PC-9 (cell line): ENCODE measurements at regions of chr14 and their contacts with region 1.

Region 1: DNA sequence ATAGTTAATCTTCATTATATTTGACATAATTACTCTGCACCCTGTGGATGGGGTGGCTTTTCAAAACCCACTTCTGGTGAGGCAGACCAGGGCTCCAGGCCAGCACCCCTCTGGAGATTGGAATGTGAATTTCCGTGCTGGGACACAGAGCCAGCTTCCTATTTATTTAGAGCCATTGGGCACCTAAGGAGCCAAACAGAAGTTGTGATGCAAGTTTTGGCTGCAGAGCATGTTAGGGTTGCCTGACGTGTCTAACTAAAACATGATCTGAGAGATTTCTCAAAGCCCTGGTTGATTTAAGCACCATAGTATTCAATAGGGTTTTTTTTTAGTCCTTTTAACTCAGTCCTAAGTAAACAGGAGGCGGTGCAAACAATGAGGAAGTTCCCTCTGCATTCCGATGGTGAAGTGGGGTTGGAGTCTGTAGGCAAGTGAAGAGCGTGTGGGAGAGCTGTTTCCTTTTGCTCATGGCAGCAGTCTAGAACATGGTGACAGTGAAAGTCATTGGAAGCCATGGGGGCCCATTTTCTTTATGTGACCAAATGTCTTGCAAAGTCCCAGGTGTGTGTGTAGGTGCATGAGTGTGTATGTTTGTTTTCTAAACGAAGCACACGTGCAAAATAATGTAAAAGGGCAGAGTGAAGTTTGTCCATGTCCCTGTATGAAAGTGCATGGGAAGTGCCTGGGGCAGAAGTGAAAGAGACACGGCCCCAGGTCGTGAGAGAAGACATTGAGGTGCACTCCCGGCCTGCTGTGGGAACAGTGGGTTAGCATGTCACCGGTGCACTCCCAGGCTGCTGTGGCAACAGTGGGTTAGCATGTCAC is 117.7 kb downstream of the PRKCH start:
- DNase-seq: peak; percentile 74 to 100
- H3K4me3 ChIP-seq: peak overlapping the region; percentile 50
- H3K27ac ChIP-seq: peak overlapping the region; percentile 93
- H3K4me1 ChIP-seq: peaks cover 37% of the 10 kb centered on the region
- H3K27me3 ChIP-seq: no peaks in the 10 kb centered on the region
- CTCF ChIP-seq: no peak

Region 2: DNA sequence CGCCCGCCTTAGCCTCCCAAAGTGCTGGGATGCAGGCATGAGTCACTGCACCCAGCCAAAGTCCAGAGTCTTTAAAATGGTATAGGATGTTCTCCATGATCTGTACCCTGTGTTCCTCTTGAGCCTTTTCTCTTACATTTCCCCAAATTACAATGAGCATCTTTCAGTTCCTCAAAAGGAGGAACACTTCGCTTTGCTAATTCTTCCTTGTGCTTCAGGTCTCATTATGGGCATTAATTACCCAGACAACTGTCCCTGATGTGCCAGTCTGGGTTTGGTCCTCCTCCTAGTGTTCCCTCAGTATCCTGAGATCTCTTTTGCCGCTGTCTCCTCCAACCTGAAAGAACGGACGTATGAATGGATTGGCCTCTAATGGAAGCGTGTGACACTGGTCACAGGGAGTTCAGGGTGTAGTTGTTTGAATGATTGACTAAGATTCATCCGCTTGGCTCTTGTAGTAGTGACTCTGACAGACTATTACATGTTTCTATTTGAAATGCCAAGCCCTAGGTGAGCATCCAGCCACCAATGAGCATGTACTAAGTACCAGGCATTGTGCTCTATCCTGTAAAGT is 109.5 kb before region 1 on chr14:
- CTCF ChIA-PET with region 1: no interaction called
- POLR2A ChIA-PET with region 1: no interaction called
- intact Hi-C with region 1: no loop called
- DNase-seq: no peak
- H3K4me3 ChIP-seq: no peak overlapping the region
- H3K27ac ChIP-seq: no peak overlapping the region
- H3K4me1 ChIP-seq: peaks cover 26% of the 10 kb centered on the region
- H3K27me3 ChIP-seq: no peaks in the 10 kb centered on the region
- CTCF ChIP-seq: no peak

Region 3: GRCh38 chr14:61355892-61356325 is 83.2 kb before region 1 on chr14:
- CTCF ChIA-PET with region 1: no interaction called
- POLR2A ChIA-PET with region 1: no interaction called
- intact Hi-C with region 1: loop called (anchors 1 kb)
- DNase-seq: peak; percentile 94 to 100
- H3K4me3 ChIP-seq: peak overlapping the region; percentile 48; the same call in 1 of the 2 replicates
- H3K27ac ChIP-seq: peak overlapping the region; percentile 95
- H3K4me1 ChIP-seq: peaks cover 65% of the 10 kb centered on the region
- H3K27me3 ChIP-seq: no peaks in the 10 kb centered on the region
- CTCF ChIP-seq: no peak

Region 4: DNA sequence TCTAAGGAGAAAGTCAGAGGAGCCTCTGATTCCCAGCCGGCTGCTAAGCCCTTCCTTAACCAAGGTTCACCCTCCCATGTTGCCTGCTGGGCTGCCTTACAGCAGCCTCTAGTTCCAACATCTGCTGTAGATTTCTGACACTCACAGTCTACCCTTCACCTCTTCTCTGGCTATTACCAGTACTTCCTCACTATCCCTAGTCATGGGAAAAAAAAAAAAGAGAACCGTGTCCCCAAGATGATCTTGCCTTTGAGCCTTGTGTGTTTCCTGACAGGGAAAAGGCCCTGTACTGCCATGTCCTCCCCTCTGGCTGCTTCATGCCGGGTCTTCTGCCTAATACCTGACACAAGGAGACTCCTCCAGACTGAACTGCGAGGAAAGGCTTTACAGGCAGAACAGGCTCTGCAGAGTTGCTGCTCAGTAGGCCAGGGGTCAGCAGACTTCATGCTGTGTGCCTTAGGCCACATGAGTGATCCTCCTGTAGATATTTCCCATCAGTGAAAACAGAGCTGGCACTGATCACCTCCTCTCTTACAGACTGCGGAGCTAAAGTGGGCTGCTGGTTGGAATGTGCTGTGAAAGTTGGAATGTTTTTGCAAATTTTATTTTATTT is 70.9 kb before region 1 on chr14:
- CTCF ChIA-PET with region 1: no interaction called
- POLR2A ChIA-PET with region 1: no interaction called
- intact Hi-C with region 1: loop called (anchors 1 kb)
- DNase-seq: peak; percentile 74 to 96
- H3K4me3 ChIP-seq: peak overlapping the region; percentile 51
- H3K27ac ChIP-seq: peak overlapping the region; percentile 97
- H3K4me1 ChIP-seq: peaks cover 64% of the 10 kb centered on the region
- H3K27me3 ChIP-seq: no peaks in the 10 kb centered on the region
- CTCF ChIP-seq: no peak

Region 5: GRCh38 chr14:61381547-61381946 is 57.5 kb before region 1 on chr14:
- CTCF ChIA-PET with region 1: no interaction called
- POLR2A ChIA-PET with region 1: no interaction called
- intact Hi-C with region 1: loop called (anchors 1 kb)
- DNase-seq: peak; percentile 61 to 73
- H3K4me3 ChIP-seq: no peak overlapping the region
- H3K27ac ChIP-seq: peak overlapping the region; percentile 36
- H3K4me1 ChIP-seq: peaks cover 54% of the 10 kb centered on the region
- H3K27me3 ChIP-seq: no peaks in the 10 kb centered on the region
- CTCF ChIP-seq: no peak

Region 6: DNA sequence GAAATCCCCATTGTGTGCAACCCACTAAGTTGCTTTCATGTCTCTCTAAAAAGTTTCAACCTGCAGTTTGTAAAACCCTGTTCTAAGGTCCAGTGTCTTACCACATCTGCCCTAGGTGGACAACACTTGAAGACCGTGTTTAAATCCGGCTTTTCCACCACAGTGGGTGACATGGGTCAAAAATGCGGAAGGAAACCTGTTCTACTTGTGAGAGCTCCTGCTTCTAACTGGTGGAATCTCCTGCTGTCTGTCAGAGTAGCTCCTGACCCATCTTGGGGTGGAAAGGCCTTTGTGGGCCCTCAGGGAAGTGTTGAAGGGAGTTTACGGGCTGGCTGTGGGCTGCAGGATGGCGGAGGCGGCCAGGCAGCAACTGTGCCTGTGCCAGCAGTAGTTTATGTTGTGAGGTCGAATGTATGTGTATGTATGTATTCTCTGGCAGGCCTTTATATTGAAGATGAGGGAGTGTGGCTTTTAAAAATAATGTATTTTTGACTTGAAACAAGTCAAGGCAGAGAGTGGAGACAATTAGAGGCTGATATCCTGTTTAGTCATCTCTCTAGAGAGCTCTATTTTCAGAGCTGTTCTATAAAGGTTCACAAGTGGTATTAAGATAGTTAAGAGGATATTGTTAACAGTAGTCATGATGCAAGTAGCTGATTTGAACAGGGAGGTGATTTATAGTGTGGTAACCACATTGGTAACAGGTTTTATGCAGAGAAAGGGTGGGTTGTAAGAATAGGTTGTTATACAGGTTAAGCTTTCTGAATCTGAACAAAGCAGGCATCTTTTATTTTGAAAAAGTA is 50.7 kb before region 1 on chr14:
- CTCF ChIA-PET with region 1: no interaction called
- POLR2A ChIA-PET with region 1: interaction called, 4 read pairs
- intact Hi-C with region 1: loop called (anchors 1 kb)
- DNase-seq: peak; percentile 73 to 98
- H3K4me3 ChIP-seq: peak overlapping the region; percentile 36; the same call in 1 of the 2 replicates
- H3K27ac ChIP-seq: peak overlapping the region; percentile 97
- H3K4me1 ChIP-seq: peaks cover 69% of the 10 kb centered on the region
- H3K27me3 ChIP-seq: no peaks in the 10 kb centered on the region
- CTCF ChIP-seq: no peak